ENCODE measurements at regions of chr2 and their contacts with region 1.

Region 1: GRCh38 chr2:219402665-219403515 is 15.2 kb upstream of the DNPEP start:
- DNase-seq: peak; percentile 71
- ATAC-seq: peak; percentile 84
- H3K4me3 ChIP-seq: no peak overlapping the region
- H3K4me3 Mint-ChIP-seq: no peak overlapping the region
- H3K27ac ChIP-seq: no peak overlapping the region
- H3K27ac Mint-ChIP-seq: no peak overlapping the region
- H3K4me1 ChIP-seq: no peaks in the 10 kb centered on the region
- H3K4me1 Mint-ChIP-seq: no peaks in the 10 kb centered on the region
- H3K27me3 ChIP-seq: peaks cover 0 to 25% (median 0%) of the 10 kb centered on the region in 4 experiments
- H3K27me3 Mint-ChIP-seq: peaks cover 28% of the 10 kb centered on the region
- CTCF ChIP-seq: peak; percentile 93

Region 2: GRCh38 chr2:219459460-219460311 is 56.8 kb after region 1 on chr2:
- CTCF ChIA-PET with region 1: interaction called, 7 read pairs
- POLR2A ChIA-PET with region 1: no interaction called
- intact Hi-C with region 1: loop called (anchors 2 kb)
- DNase-seq: peak; percentile 58
- ATAC-seq: peak; percentile 62
- H3K4me3 ChIP-seq: no peak overlapping the region
- H3K4me3 Mint-ChIP-seq: no peak overlapping the region
- H3K27ac ChIP-seq: no peak overlapping the region
- H3K27ac Mint-ChIP-seq: no peak overlapping the region
- H3K4me1 ChIP-seq: no peaks in the 10 kb centered on the region
- H3K4me1 Mint-ChIP-seq: peaks cover 3% of the 10 kb centered on the region
- H3K27me3 ChIP-seq: peaks cover 0 to 17% (median 2%) of the 10 kb centered on the region in 4 experiments
- H3K27me3 Mint-ChIP-seq: peaks cover 21% of the 10 kb centered on the region
- CTCF ChIP-seq: peak; percentile 85

Region 3: GRCh38 chr2:219498280-219499057 is 95.6 kb after region 1 on chr2 and contains the start of gene GMPPA:
- CTCF ChIA-PET with region 1: interaction called, 10 read pairs
- POLR2A ChIA-PET with region 1: no interaction called
- intact Hi-C with region 1: no loop called
- DNase-seq: peak; percentile 94
- ATAC-seq: peak; percentile 96
- H3K4me3 ChIP-seq: peak within 1 kb of the TSS; percentile 65 to 90 (median 79)
- H3K4me3 Mint-ChIP-seq: peak within 1 kb of the TSS; percentile 93
- H3K27ac ChIP-seq: peak within 1 kb of the TSS in 1 of 2 donors; percentile 84
- H3K27ac Mint-ChIP-seq: peak within 1 kb of the TSS; percentile 87
- H3K4me1 ChIP-seq: peaks cover 38% of the 10 kb centered on the region in 2 donors
- H3K4me1 Mint-ChIP-seq: peaks cover 32% of the 10 kb centered on the region
- H3K27me3 ChIP-seq: peaks cover 0 to 46% (median 23%) of the 10 kb centered on the region in 4 experiments
- H3K27me3 Mint-ChIP-seq: peaks cover 33% of the 10 kb centered on the region
- CTCF ChIP-seq: no peak
- total RNA-seq, gene GMPPA: 27.8 and 32.0 TPM in 2 replicates

Region 4: DNA sequence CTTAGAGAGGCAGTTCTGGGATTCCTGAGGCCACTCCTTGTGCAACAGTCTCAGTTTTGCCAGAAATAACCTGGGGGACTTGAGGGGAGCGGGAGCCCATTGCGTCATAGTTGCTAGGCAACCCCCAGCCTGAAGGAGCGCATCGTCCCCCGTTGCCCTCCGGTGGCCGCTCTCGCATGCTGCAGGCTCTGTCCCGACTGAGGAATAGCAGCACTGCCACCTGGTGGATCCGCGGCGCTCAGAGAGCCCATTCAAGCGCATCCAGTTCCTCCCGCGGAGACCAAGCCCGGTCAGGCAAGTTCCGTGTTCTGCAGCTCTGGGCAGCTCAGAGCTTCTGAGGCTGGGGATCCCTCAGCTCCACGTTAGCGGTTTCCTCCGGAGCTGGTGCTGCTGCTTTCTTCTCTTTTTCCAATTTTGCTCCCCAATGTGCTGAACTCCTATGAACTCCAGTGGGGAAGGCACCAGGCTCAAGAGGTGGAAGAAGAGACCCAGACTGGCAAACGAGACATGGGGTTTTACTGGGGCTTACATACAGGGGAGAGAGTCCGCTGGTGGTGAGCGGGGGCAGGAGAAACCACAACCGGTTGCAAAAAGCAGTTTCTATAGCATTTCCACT is 239.7 kb after region 1 on chr2:
- CTCF ChIA-PET with region 1: interaction called, 5 read pairs
- POLR2A ChIA-PET with region 1: no interaction called
- intact Hi-C with region 1: loop called (anchors 5 kb)
- DNase-seq: peak; percentile 96
- ATAC-seq: peak; percentile 100
- H3K4me3 ChIP-seq: peak overlapping the region in 4 of 5 experiments; percentile 10 to 40 (median 27)
- H3K4me3 Mint-ChIP-seq: peak overlapping the region; percentile 75
- H3K27ac ChIP-seq: no peak overlapping the region
- H3K27ac Mint-ChIP-seq: peak overlapping the region; percentile 50
- H3K4me1 ChIP-seq: peaks cover 8 to 17% of the 10 kb centered on the region in 2 donors
- H3K4me1 Mint-ChIP-seq: peaks cover 15% of the 10 kb centered on the region
- H3K27me3 ChIP-seq: peaks cover 0 to 37% (median 4%) of the 10 kb centered on the region in 4 experiments
- H3K27me3 Mint-ChIP-seq: peaks cover 31% of the 10 kb centered on the region
- CTCF ChIP-seq: peak; percentile 99

Region 5: GRCh38 chr2:219701847-219702634 is 299.2 kb after region 1 on chr2:
- CTCF ChIA-PET with region 1: no interaction called
- POLR2A ChIA-PET with region 1: no interaction called
- intact Hi-C with region 1: loop called (anchors 5 kb)
- DNase-seq: no peak
- ATAC-seq: no peak
- H3K4me3 ChIP-seq: no peak overlapping the region
- H3K4me3 Mint-ChIP-seq: no peak overlapping the region
- H3K27ac ChIP-seq: no peak overlapping the region
- H3K27ac Mint-ChIP-seq: no peak overlapping the region
- H3K4me1 ChIP-seq: no peaks in the 10 kb centered on the region
- H3K4me1 Mint-ChIP-seq: no peaks in the 10 kb centered on the region
- H3K27me3 ChIP-seq: peaks cover 0 to 12% (median under 1%) of the 10 kb centered on the region in 4 experiments
- H3K27me3 Mint-ChIP-seq: peaks cover 44% of the 10 kb centered on the region
- CTCF ChIP-seq: no peak

Region 6: DNA sequence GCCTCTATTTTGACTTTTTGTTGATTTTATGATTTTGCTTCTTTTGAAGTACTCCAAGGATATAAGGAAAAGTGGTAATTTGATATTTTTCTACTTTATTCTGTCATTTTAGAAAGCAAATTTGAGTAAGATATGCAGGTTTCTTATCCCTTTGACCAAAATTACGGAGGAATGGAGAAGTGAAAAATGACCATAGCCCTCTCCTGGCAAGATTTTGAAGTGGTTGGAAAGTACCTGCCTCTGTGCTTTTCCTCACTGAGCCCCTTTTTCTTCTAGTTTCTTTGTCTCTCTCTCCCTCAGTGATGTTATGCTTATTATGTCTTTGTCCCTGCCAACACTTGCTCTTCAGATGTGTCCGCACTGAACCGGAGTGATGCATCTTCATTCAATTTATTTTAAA is 1271.1 kb after region 1 on chr2:
- CTCF ChIA-PET with region 1: no interaction called
- POLR2A ChIA-PET with region 1: no interaction called
- intact Hi-C with region 1: no loop called
- DNase-seq: no peak
- ATAC-seq: no peak
- H3K4me3 ChIP-seq: no peak overlapping the region
- H3K4me3 Mint-ChIP-seq: no peak overlapping the region
- H3K27ac ChIP-seq: no peak overlapping the region
- H3K27ac Mint-ChIP-seq: no peak overlapping the region
- H3K4me1 ChIP-seq: no peaks in the 10 kb centered on the region
- H3K4me1 Mint-ChIP-seq: no peaks in the 10 kb centered on the region
- H3K27me3 ChIP-seq: no peaks in the 10 kb centered on the region
- H3K27me3 Mint-ChIP-seq: peaks cover 13% of the 10 kb centered on the region
- CTCF ChIP-seq: no peak